Activated B cell treated with CpG ODN at 0.5 μM for 24 hours (primary cell): ENCODE measurements at regions of chr1 and their contacts with region 1.

Region 1: GRCh38 chr1:230066466-230067404 is at the start of gene GALNT2:
- DNase-seq: peak; percentile 88
- ATAC-seq: peak; percentile 88
- H3K4me3 Mint-ChIP-seq: peak within 1 kb of the TSS; percentile 95
- H3K27ac Mint-ChIP-seq: peak within 1 kb of the TSS; percentile 92
- H3K4me1 Mint-ChIP-seq: peaks cover 46% of the 10 kb centered on the region
- H3K27me3 Mint-ChIP-seq: no peaks in the 10 kb centered on the region
- CTCF ChIP-seq: no peak
- total RNA-seq, gene GALNT2: 99.8 and 108 TPM in 2 replicates

Region 2: GRCh38 chr1:229625915-229626831 is 440.6 kb before region 1 on chr1 and contains the starts of genes TAF5L and URB2:
- CTCF ChIA-PET with region 1: no interaction called
- POLR2A ChIA-PET with region 1: no interaction called
- intact Hi-C with region 1: loop called (anchors 2 kb)
- DNase-seq: peak; percentile 86
- ATAC-seq: peak; percentile 92
- H3K4me3 Mint-ChIP-seq: peak within 1 kb of the TSS; percentile 99
- H3K27ac Mint-ChIP-seq: peak within 1 kb of the TSS; percentile 92
- H3K4me1 Mint-ChIP-seq: peaks cover 58% of the 10 kb centered on the region
- H3K27me3 Mint-ChIP-seq: no peaks in the 10 kb centered on the region
- CTCF ChIP-seq: no peak
- total RNA-seq, gene TAF5L: 22.0 and 24.4 TPM in 2 replicates
- total RNA-seq, gene URB2: 17.4 and 21.8 TPM in 2 replicates

Region 3: GRCh38 chr1:229993060-229993459 is 73.7 kb before region 1 on chr1:
- CTCF ChIA-PET with region 1: no interaction called
- POLR2A ChIA-PET with region 1: no interaction called
- intact Hi-C with region 1: loop called (anchors 1 kb)
- DNase-seq: no peak
- ATAC-seq: peak; percentile 73
- H3K4me3 Mint-ChIP-seq: no peak overlapping the region
- H3K27ac Mint-ChIP-seq: no peak overlapping the region
- H3K4me1 Mint-ChIP-seq: peaks cover 6% of the 10 kb centered on the region
- H3K27me3 Mint-ChIP-seq: peaks cover 4% of the 10 kb centered on the region
- CTCF ChIP-seq: no peak

Region 4: DNA sequence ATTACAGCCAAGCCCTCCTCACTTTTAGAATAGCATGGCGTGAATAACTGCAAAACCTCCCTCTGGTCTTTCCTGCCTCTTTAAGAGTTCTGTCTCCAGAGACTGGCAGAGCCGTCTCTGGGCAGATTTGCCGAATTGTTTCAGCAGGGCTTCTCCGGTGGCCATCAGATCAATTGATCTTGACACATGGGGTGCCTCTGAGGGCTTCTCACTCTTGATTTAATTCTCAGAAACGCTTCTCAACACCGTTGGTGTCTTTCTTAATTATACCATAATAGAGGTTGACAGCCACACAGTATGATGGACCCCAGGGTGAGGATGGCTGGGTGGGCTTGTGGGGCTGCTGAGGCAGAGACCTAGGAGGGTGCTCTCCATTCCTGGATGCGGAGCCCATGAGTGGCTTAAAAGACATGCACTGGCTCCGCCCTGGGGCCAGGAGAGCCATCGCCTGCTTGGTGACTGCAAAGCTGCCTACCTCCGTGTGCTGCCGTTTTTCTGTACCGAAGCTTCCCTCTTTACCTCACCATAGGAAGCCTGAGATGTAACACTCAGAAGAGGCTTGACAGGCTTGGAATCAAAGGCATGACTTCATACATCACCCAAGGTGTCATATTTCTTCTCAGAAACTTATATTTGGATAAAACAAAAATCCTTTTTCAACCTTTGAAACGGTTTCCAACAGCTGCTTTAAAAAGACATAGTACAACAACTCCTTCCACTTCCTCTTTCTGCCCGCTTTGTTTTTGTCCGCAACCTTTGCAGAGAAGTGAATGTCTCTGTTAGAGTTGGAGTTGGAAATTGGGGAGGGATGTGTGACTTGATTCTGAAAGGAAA is 83.2 kb after region 1 on chr1:
- CTCF ChIA-PET with region 1: no interaction called
- POLR2A ChIA-PET with region 1: interaction called, 13 read pairs
- intact Hi-C with region 1: loop called (anchors 1 kb)
- DNase-seq: no peak
- ATAC-seq: peak; percentile 81
- H3K4me3 Mint-ChIP-seq: peak overlapping the region; percentile 80
- H3K27ac Mint-ChIP-seq: peak overlapping the region; percentile 94
- H3K4me1 Mint-ChIP-seq: peaks cover 71% of the 10 kb centered on the region
- H3K27me3 Mint-ChIP-seq: no peaks in the 10 kb centered on the region
- CTCF ChIP-seq: no peak

Region 5: DNA sequence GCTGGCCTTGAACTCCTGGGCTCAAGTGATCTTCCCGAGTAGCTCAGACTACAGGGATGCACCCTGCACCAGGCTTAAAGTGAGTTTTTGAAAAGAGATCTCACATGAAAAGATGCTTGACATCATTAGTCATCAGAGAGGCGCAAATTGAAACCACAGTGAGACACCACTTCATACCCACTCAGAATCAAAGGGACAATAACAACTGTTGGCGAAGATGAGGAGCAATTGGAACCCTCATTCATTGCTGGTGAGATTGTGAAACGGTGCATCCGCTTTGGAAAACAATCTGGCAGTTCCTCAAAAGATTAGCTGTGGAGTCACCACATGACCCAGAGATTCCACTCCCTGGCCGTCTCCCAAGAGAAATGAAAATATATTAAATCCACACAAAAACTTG is 237.1 kb after region 1 on chr1:
- CTCF ChIA-PET with region 1: no interaction called
- POLR2A ChIA-PET with region 1: interaction called, 3 read pairs
- intact Hi-C with region 1: loop called (anchors 5 kb)
- DNase-seq: no peak
- ATAC-seq: no peak
- H3K4me3 Mint-ChIP-seq: no peak overlapping the region
- H3K27ac Mint-ChIP-seq: no peak overlapping the region
- H3K4me1 Mint-ChIP-seq: peaks cover 65% of the 10 kb centered on the region
- H3K27me3 Mint-ChIP-seq: no peaks in the 10 kb centered on the region
- CTCF ChIP-seq: no peak